ENCODE measurements at regions of chr6 and their contacts with region 1.

Region 1: DNA sequence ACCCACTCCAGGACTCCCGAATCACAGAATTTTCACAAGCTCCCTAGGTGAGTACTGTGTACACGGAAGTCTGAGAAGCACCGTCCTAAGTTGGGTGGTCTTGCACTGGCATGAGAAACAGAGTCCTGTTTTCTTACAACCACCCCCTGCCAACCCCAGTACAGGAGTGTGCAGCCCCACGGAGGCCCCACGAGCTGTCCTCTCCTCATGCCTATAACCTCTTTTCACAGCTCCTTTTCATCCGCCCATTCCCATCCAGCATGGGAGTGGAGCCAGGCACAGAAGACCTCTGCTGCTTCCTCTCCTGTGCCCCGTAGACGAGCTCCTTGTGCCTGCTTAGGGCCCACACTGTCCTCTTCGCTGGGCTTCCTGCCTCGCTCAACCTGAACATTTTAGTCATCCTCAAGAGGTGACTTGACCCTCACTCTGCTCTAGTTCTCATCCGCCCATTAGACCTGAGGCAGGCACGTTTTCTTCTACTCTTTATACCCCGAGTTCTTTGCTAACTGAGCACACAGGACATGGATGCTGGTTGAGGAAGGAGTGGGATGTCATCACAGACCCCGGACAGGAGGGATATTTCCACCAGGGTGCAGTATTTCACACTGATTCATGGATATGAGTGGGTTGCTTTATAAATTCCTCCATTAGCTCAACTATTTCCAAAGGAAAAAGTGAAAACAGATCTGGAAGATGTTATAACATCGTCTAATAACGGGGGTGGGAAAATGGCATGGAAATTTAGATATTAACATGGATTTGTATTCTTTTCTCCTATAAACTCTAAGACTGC is 160.5 kb downstream of the TTLL2 start:
- DNase-seq: no peak
- ATAC-seq: peak in 1 of 2 donors; percentile 62
- H3K4me3 ChIP-seq: no peak overlapping the region
- H3K27ac ChIP-seq: no peak overlapping the region
- H3K4me1 ChIP-seq: peaks cover 0 to 1% of the 10 kb centered on the region in 2 donors
- H3K27me3 ChIP-seq: no peaks in the 10 kb centered on the region
- CTCF ChIP-seq: peak; percentile 25 to 53 (median 43)
- POLR2A ChIP-seq: no peak

Region 2: DNA sequence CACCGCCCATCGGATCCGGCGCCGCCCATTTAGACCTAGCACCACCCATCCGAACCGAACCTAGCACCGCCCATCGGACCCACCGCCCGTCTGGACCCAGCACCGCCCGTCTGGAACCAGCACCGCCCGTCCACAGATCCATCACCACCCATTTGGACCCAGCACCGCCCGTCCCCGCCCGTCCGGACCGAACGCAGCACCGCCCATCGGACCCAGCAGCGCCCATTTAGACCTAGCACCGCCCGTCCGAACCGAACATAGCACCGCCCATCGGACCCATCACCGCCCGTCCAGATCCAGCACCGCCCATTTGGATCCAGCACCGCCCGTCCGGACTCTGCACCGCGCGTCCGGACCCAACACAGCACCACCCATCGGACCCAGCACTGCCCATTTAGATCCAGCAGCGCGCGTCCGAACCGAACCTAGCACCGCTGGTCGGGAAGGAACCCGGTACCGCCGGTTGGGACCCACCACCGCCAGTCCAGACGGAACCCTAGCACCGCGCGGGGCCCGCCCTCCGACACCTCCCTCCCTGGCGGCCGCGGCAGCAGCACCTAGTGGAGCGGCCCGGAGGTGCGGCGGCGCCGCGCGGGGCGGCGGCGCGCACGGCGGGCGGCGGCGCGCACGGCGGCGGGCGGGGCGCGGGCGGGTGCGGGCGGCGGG is 341.0 kb after region 1 on chr6:
- in situ Hi-C with region 1: no loop called
- intact Hi-C with region 1: loop called (anchors 10 kb)
- DNase-seq: peak; percentile 49 to 50
- ATAC-seq: peak; percentile 69 to 81
- H3K4me3 ChIP-seq: peak overlapping the region; percentile 63 to 81 (median 79)
- H3K27ac ChIP-seq: peak overlapping the region in 3 of 4 donors; percentile 38 to 58 (median 56)
- H3K4me1 ChIP-seq: peaks cover 21% of the 10 kb centered on the region in 2 donors
- H3K27me3 ChIP-seq: no peaks in the 10 kb centered on the region
- CTCF ChIP-seq: peak; percentile 33 to 60 (median 49)
- POLR2A ChIP-seq: no peak

Region 3: GRCh38 chr6:167898673-167899311 is 413.4 kb after region 1 on chr6:
- in situ Hi-C with region 1: loop called in 3 of 4 experiments (anchors 5 to 10 kb)
- intact Hi-C with region 1: loop called (anchors 2 kb)
- DNase-seq: no peak
- ATAC-seq: peak in 1 of 2 donors; percentile 30
- H3K4me3 ChIP-seq: no peak overlapping the region
- H3K27ac ChIP-seq: no peak overlapping the region
- H3K4me1 ChIP-seq: peaks cover 0 to 8% of the 10 kb centered on the region in 2 donors
- H3K27me3 ChIP-seq: no peaks in the 10 kb centered on the region
- CTCF ChIP-seq: peak; percentile 45 to 77 (median 65)
- POLR2A ChIP-seq: no peak

Measured in gastrocnemius medialis (tissue), 4 donors.